Activated naive CD4-positive, alpha-beta T cell treated with anti-CD3 and anti-CD28 coated beads for 36 hours (primary cell): ENCODE measurements at regions of chr9 and their contacts with region 1.

Region 1: GRCh38 chr9:34701769-34702736 is 7.9 kb downstream of the CCL21 start:
- DNase-seq: peak; percentile 90
- H3K4me3 Mint-ChIP-seq: peak overlapping the region; percentile 69
- H3K27ac Mint-ChIP-seq: no peak overlapping the region
- H3K4me1 Mint-ChIP-seq: peaks cover 7% of the 10 kb centered on the region
- H3K27me3 Mint-ChIP-seq: peaks cover 5% of the 10 kb centered on the region

Region 2: DNA sequence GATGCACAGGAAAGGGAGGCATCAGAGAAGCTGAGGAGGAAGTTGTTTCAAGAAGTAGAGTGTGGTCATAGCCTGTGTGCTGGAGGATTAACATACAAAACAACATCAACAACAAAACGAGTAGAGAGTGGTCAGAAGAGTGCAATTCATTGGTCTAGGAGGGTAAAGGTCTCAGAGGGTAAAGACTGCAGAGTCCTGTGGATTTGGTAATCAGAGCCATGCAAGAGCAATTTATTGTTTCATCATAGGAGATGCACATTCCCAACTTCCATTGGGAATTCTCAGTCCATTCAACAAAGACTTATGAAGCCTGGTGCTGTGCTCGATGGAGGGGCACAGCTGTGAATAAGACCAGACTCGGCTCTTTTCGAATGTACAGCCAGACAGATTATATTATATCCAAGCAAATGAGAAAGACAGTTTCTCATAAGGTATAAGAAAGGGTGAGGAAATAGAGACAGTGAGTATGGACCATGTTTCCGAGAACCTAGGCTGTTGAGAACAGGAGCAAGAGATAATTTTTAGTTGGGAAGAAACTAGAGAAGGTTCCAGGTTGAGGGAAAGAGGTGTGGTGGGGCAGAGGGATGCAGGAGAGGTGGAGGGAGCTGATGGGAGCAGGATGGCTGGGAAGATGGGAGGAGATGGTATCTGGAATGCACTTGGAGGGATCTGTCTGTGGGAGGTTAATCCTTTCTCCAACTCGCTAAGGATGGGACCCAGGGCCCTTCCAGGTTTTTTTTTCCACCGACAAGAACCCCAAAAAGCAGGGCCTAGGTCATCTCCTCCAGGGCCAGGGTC is 317.5 kb before region 1 on chr9:
- CTCF ChIA-PET with region 1: no interaction called
- intact Hi-C with region 1: no loop called
- DNase-seq: no peak
- H3K4me3 Mint-ChIP-seq: no peak overlapping the region
- H3K27ac Mint-ChIP-seq: no peak overlapping the region
- H3K4me1 Mint-ChIP-seq: peaks cover 16% of the 10 kb centered on the region
- H3K27me3 Mint-ChIP-seq: no peaks in the 10 kb centered on the region

Region 3: GRCh38 chr9:34522971-34523797 is 178.9 kb before region 1 on chr9 and contains the start of gene ENHO:
- CTCF ChIA-PET with region 1: no interaction called
- intact Hi-C with region 1: loop called (anchors 5 kb)
- DNase-seq: peak; percentile 88
- H3K4me3 Mint-ChIP-seq: peak within 1 kb of the TSS; percentile 57
- H3K27ac Mint-ChIP-seq: no peak within 1 kb of the TSS
- H3K4me1 Mint-ChIP-seq: peaks cover 22% of the 10 kb centered on the region
- H3K27me3 Mint-ChIP-seq: peaks cover 11% of the 10 kb centered on the region
- total RNA-seq, gene ENHO: 0.19 to 0.27 TPM

Region 4: DNA sequence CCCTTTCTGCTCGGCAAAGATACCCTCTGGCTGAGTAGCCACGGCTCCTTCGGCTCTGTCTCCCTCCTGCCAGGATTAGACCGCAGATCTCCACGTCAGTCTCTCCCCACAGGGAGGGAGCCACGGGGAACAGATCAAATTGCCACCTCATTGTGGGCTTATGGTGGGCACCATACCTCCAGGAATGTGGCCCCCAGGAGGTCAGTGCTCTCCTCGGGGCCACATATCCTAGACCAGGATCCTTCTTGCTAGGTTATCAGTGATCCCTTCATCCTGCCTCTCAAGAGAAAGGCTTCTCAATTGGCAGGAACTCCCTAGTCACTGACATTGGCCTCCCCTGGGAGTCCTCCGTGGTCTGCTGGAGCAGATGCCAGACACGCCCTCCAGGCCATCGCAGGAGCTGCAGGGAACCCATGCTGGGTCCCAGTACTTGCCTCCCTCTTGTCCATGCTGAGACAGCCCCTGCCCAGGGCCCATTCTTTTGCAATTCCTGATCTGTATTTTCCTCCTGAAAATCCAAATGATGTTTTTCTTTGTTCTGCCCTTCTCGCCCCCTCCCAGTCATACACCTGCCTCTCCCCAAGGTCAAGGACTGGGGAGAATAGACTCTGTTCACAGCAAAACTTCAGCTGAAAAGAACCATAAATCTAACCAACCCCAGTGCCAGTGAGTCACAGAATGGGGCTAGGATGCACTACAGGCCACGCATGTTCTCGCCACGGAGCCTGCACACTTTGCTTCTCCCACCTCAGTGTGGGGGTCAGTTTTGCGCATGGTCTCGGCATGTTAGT is 147.6 kb before region 1 on chr9:
- CTCF ChIA-PET with region 1: no interaction called
- intact Hi-C with region 1: no loop called
- DNase-seq: no peak
- H3K4me3 Mint-ChIP-seq: no peak overlapping the region
- H3K27ac Mint-ChIP-seq: no peak overlapping the region
- H3K4me1 Mint-ChIP-seq: no peaks in the 10 kb centered on the region
- H3K27me3 Mint-ChIP-seq: peaks cover 17% of the 10 kb centered on the region

Region 5: DNA sequence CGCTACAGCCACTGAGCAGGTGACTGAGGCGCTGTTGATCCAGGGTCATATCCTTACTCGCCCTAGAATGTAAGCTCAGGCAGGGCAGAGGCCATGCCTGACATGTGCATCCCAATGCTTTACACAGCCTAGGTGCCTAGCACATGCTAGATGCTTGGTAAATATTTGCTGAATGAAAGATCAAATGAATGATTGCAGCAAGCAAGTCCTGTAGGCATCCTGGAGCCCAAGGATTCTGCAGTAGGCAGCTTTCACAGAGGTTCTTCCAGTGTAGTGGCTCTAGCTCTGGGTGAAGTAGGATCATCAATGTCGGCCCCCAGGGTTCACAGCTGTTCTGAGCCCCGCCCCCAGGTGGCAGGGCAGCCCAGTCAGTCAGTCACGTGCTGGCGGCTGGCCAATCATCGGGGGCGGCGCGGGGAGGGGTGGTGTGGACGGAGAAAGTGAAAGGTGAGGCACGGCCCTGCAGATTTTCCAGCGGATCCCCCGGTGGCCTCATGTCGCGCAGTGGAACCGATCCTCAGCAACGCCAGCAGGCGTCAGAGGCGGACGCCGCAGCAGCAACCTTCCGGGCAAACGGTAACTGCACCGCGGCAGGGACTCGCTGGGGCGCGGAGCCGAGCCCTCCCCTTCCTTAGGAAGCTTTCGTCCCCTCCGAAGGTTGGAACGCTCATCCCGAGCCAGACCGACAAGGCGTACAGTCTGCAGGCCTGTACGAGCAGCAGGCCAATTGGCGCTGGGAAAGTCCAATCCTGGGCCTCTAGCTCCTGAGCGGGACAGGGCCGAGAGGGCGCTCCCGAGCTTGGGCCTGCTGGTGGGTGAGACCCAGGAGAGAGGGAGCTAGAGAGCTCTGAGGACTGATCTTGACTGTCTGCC is 55.6 kb before region 1 on chr9 and contains the start of gene GALT:
- CTCF ChIA-PET with region 1: interaction called, 8 read pairs
- intact Hi-C with region 1: loop called (anchors 1 kb)
- DNase-seq: peak; percentile 98
- H3K4me3 Mint-ChIP-seq: peak within 1 kb of the TSS; percentile 86
- H3K27ac Mint-ChIP-seq: peak within 1 kb of the TSS; percentile 83
- H3K4me1 Mint-ChIP-seq: peaks cover 18% of the 10 kb centered on the region
- H3K27me3 Mint-ChIP-seq: no peaks in the 10 kb centered on the region
- total RNA-seq, gene GALT: 42.0 to 44.6 TPM

Region 6: DNA sequence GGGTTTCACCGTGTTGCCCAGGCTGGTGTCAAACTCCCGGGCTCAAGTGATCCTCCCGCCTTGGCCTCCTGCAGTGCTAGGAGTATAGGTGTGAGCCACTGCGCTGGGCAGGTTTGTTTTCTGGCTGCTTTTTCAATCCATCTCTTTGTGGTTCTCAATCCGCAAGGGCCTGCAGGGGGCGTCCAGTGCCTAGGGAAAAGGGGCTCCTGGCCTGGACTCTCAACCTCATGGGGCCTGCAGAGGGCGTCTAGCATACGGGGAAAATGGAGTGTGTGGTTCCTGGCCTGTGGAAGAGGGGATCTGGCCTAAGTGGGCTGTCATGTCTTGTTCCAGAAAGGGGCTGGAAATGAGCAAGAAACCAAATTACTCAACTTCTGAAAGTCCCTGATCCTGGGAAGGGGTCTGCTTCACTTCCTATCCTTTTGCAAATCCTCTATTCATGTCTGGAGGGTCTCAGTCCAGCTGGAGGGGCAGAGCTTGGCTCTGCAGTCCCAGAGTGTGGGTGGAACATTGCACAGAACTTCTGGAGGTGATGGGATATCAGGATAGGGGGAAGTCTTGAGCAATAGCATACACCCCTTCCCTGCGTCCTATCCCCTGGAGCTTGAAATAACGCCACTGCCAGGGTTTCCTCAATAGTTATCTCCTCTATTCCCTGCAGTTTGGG is 26.9 kb before region 1 on chr9:
- CTCF ChIA-PET with region 1: interaction called, 65 read pairs
- intact Hi-C with region 1: loop called (anchors 1 kb)
- DNase-seq: peak; percentile 81
- H3K4me3 Mint-ChIP-seq: no peak overlapping the region
- H3K27ac Mint-ChIP-seq: no peak overlapping the region
- H3K4me1 Mint-ChIP-seq: no peaks in the 10 kb centered on the region
- H3K27me3 Mint-ChIP-seq: no peaks in the 10 kb centered on the region

Region 7: GRCh38 chr9:35079426-35080341 is 377.6 kb after region 1 on chr9 and contains the start of gene FANCG:
- CTCF ChIA-PET with region 1: no interaction called
- intact Hi-C with region 1: no loop called
- DNase-seq: peak; percentile 92
- H3K4me3 Mint-ChIP-seq: peak within 1 kb of the TSS; percentile 94
- H3K27ac Mint-ChIP-seq: peak within 1 kb of the TSS; percentile 98
- H3K4me1 Mint-ChIP-seq: peaks cover 19% of the 10 kb centered on the region
- H3K27me3 Mint-ChIP-seq: no peaks in the 10 kb centered on the region
- total RNA-seq, gene FANCG: 109 to 118 TPM

Region 8: DNA sequence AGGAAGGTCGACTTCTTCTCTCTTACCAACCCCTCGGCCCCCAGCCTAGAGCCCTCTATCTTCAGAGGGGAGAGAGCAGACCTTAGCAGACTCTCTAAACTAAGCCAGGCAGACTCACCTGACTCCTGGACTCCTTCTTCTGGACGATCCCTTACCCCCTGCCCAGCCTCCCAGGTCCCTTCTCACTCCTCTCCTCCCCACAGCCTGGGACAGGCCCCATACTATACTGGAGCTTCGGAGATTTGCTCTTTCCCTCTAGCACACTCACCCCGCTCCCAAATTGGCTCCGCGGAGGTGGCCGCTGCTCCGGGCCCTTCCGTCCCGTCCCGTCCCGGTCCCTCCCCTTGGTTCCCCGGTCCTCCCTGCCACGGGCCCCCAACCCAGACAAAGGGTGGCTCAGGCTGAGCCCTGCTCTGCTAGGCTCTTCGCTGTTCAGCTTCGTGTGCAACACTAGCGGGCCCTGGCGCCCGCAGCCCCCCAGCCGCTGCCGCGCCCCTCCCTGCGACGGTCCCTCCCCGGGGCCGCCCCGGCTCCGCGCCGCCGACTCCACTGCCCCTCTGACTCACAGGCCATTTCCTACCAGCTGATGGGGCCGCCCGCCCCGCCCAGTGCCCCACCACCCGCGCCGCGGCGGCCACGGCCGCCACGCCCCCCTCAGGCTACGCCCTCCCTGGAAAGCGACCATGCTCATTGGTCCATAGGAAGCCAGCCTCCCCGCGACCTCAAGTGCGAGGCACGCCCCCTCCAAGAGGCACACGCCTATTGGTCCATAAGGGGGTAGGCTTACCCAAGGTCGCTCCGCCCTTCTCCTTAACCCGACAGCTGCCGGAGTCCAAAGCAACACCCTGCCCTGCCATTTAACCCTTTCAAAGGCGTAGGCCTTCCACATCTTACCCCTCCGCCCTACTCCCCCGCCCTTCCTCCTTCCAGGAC is 409.2 kb after region 1 on chr9:
- CTCF ChIA-PET with region 1: no interaction called
- intact Hi-C with region 1: loop called (anchors 5 kb)
- DNase-seq: peak; percentile 97
- H3K4me3 Mint-ChIP-seq: peak overlapping the region; percentile 56
- H3K27ac Mint-ChIP-seq: peak overlapping the region; percentile 88
- H3K4me1 Mint-ChIP-seq: peaks cover 44% of the 10 kb centered on the region
- H3K27me3 Mint-ChIP-seq: no peaks in the 10 kb centered on the region